ENCODE measurements at regions of chr20 and their contacts with region 1.

Region 1: DNA sequence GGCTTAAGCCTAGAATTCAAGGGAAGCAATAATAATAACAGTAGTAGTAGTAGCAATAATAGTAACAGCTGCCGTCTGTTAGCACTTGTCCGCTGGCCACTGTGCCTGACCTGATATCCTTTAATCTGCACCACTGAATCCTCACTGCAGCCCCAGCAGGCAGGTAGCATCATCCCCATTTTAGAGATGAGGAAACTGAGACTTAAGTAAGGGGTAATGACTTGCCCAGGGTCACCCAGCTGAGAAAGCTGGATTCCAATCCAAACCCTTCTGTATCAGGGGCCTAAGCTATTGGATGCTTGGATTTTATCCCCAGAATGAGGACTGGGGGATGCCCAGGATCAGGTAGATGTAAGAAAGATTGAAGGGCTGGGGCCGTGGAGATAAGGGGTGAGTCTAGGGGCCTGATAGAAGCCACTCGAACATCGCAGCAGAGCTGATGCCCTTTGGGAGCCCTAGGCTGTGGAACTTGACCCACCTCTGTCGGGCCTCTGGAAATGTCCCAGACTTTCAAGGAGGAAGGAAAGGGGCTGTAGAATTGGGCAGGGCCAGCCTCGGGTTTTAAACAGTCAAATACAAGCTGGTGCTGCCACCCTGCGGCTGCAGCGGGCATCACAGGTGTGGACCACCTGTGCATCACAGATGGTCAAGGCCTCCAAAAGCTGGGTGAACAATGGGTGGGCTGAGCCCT is 102.1 kb upstream of the MYL9 start:
- DNase-seq: peak; percentile 77
- ATAC-seq: peak; percentile 76

Region 2: DNA sequence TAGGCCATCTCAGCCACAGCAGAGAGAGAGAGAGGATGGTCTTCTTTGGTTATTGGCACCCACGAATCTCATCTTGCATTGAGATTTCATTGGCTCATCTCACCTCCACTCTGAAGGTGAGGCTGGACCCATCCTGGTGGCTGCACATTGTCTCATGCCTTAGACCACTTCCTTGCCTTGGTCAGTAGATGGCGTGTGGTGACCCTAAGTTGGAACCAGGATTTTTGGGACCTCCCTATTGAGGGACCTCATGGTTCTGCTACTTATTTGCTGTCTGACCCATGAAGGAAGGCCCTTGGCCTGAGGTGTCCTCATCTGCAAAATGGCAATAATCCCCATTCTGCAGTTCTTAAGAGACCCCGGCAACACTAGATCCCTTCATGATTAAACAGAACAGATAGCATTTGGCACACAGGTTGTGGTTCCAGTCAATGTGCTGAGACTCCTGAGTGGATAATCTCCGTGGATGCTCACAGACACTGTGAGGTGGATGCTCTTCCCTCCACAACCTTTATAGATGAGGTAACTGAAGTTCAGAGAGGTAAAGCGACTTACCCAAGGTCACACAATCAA is 224.4 kb before region 1 on chr20:
- intact Hi-C with region 1: loop called (anchors 5 kb)
- DNase-seq: no peak
- ATAC-seq: no peak

Region 3: GRCh38 chr20:36303020-36303595 is 136.1 kb before region 1 on chr20:
- intact Hi-C with region 1: no loop called
- DNase-seq: no peak
- ATAC-seq: no peak